ENCODE measurements at regions of chr17 and their contacts with region 1.

Region 1: GRCh38 chr17:8894673-8895578 is 27.5 kb upstream of the PIK3R6 start:
- DNase-seq: peak; percentile 76
- H3K4me3 ChIP-seq: no peak overlapping the region
- H3K27ac ChIP-seq: no peak overlapping the region
- H3K4me1 ChIP-seq: no peaks in the 10 kb centered on the region
- H3K27me3 ChIP-seq: no peaks in the 10 kb centered on the region
- CTCF ChIP-seq: peak; percentile 84

Region 2: DNA sequence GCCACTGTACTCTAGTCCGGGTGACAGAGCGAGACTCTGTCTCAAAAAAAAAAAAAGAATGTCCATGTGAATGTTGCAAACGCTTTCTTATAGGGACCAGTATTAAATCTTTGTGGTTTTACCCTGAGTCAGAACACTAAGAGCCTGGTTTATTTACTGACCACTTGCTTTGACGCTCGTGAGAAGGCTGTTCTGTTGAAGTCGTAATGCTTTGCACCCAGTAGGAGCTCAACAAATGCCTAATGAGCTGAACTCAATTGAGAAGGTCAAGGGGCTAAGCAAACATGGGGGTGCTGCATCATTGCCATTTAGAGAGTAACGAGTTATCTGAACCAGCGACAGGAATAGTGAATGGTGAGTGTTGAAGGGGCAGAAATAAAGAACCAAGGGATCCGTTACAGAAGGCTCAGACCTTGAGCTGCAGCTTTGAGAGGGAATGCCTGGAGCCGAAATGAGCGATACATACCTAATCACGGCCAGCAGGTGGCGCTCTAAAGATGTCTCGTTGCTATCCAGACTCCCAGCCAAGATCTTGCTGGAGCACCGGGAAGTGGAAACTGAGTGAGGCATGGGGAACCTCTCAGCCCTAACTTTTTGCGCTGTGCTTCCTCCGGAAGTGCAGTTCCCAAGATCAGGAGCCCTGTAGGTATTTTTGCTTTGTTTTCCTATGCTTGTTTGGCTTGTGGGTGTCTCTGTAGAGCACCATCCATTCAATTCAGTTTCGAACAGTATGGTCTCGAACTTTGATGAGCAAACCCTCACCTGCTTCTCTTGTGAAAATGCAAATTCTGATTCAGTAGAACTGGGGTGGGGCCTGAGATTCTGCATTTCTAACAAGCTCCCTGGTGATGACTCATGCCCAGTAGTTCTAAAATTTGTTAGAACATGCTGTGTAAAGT is 484.7 kb before region 1 on chr17:
- CTCF ChIA-PET with region 1: no interaction called
- POLR2A ChIA-PET with region 1: no interaction called
- intact Hi-C with region 1: loop called (anchors 10 kb)
- DNase-seq: peak; percentile 93
- H3K4me3 ChIP-seq: no peak overlapping the region
- H3K27ac ChIP-seq: no peak overlapping the region
- H3K4me1 ChIP-seq: no peaks in the 10 kb centered on the region
- H3K27me3 ChIP-seq: no peaks in the 10 kb centered on the region
- CTCF ChIP-seq: peak; percentile 94

Region 3: GRCh38 chr17:8753976-8754440 is 140.9 kb before region 1 on chr17:
- CTCF ChIA-PET with region 1: interaction called, 3 read pairs
- POLR2A ChIA-PET with region 1: no interaction called
- intact Hi-C with region 1: loop called (anchors 5 kb)
- DNase-seq: peak; percentile 52
- H3K4me3 ChIP-seq: no peak overlapping the region
- H3K27ac ChIP-seq: no peak overlapping the region
- H3K4me1 ChIP-seq: no peaks in the 10 kb centered on the region
- H3K27me3 ChIP-seq: no peaks in the 10 kb centered on the region
- CTCF ChIP-seq: peak; percentile 57

Region 4: GRCh38 chr17:8806926-8807550 is 87.9 kb before region 1 on chr17:
- CTCF ChIA-PET with region 1: no interaction called
- POLR2A ChIA-PET with region 1: no interaction called
- intact Hi-C with region 1: loop called (anchors 5 kb)
- DNase-seq: no peak
- H3K4me3 ChIP-seq: no peak overlapping the region
- H3K27ac ChIP-seq: no peak overlapping the region
- H3K4me1 ChIP-seq: no peaks in the 10 kb centered on the region
- H3K27me3 ChIP-seq: no peaks in the 10 kb centered on the region
- CTCF ChIP-seq: no peak

Region 5: DNA sequence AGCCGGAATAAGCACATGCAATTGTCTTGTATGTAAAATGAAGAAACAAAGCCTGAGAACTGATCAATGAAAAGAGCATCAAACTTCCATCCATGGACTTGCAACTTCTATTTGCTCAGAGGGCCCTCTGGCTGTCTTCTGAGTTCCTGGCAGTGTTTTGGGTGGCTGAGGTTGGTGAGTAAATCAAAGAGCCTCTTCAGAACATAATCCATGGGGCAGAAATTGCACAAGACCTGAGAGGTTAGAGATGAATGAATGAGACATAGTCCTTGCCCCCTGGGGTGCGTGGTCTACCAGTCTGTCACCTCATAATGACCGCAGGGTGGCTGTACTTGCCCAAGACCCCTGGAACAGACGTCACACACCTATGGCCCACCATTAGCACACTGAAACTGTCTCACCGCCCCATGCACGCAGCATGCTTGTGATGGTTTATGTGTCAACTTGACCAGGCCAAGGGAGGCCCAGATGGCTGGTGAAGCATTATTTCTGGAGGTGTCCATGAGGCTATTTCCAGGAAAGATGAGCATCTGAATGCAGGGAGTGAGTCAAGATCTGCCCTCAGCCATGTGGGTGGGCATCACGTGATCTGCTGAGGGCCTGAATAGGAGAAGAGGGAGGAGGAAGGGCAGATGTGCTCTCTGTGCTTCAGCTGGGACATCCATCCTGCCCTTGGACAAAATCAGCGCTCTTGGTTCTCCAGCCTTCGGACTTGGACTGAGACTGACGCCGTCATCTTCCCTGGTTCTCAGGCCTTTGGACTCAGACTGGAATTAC is 35.7 kb before region 1 on chr17:
- CTCF ChIA-PET with region 1: interaction called, 10 read pairs
- POLR2A ChIA-PET with region 1: no interaction called
- intact Hi-C with region 1: no loop called
- DNase-seq: no peak
- H3K4me3 ChIP-seq: no peak overlapping the region
- H3K27ac ChIP-seq: peak overlapping the region; percentile 66
- H3K4me1 ChIP-seq: peaks cover 24% of the 10 kb centered on the region
- H3K27me3 ChIP-seq: no peaks in the 10 kb centered on the region
- CTCF ChIP-seq: no peak

Measured in A673 (cell line).